Mammary epithelial cell (primary cell): ENCODE measurements at regions of chr3 and their contacts with region 1.

Region 1: GRCh38 chr3:98602078-98602678 is 8.8 kb upstream of the CPOX start:
- DNase-seq: peak; percentile 48
- H3K4me3 ChIP-seq: no peak overlapping the region
- H3K27ac ChIP-seq: no peak overlapping the region
- H3K4me1 ChIP-seq: no peaks in the 10 kb centered on the region
- H3K27me3 ChIP-seq: no peaks in the 10 kb centered on the region
- CTCF ChIP-seq: peak; percentile 82 to 83

Region 2: GRCh38 chr3:98657457-98657856 is 55.3 kb after region 1 on chr3:
- CTCF ChIA-PET with region 1: no interaction called
- dilution Hi-C with region 1: no loop called
- in situ Hi-C with region 1: no loop called
- intact Hi-C with region 1: loop called (anchors 2 kb)
- DNase-seq: peak; percentile 24
- H3K4me3 ChIP-seq: peak overlapping the region in 1 of 3 experiments; percentile 4
- H3K27ac ChIP-seq: no peak overlapping the region
- H3K4me1 ChIP-seq: peaks cover 6% of the 10 kb centered on the region
- H3K27me3 ChIP-seq: no peaks in the 10 kb centered on the region
- CTCF ChIP-seq: peak; percentile 25 to 61

Region 3: GRCh38 chr3:98784666-98785600 is 182.8 kb after region 1 on chr3:
- CTCF ChIA-PET with region 1: no interaction called
- dilution Hi-C with region 1: no loop called
- in situ Hi-C with region 1: no loop called
- intact Hi-C with region 1: loop called (anchors 5 kb)
- DNase-seq: peak; percentile 87
- H3K4me3 ChIP-seq: no peak overlapping the region
- H3K27ac ChIP-seq: peak overlapping the region; percentile 30
- H3K4me1 ChIP-seq: peaks cover 48% of the 10 kb centered on the region
- H3K27me3 ChIP-seq: no peaks in the 10 kb centered on the region
- CTCF ChIP-seq: no peak

Region 4: GRCh38 chr3:98809557-98809956 is 207.4 kb after region 1 on chr3:
- CTCF ChIA-PET with region 1: no interaction called
- dilution Hi-C with region 1: loop called (anchors 5 kb)
- in situ Hi-C with region 1: loop called (anchors 5 kb)
- intact Hi-C with region 1: loop called (anchors 1 kb)
- DNase-seq: no peak
- H3K4me3 ChIP-seq: no peak overlapping the region
- H3K27ac ChIP-seq: no peak overlapping the region
- H3K4me1 ChIP-seq: peaks cover 18% of the 10 kb centered on the region
- H3K27me3 ChIP-seq: no peaks in the 10 kb centered on the region
- CTCF ChIP-seq: no peak

Region 5: DNA sequence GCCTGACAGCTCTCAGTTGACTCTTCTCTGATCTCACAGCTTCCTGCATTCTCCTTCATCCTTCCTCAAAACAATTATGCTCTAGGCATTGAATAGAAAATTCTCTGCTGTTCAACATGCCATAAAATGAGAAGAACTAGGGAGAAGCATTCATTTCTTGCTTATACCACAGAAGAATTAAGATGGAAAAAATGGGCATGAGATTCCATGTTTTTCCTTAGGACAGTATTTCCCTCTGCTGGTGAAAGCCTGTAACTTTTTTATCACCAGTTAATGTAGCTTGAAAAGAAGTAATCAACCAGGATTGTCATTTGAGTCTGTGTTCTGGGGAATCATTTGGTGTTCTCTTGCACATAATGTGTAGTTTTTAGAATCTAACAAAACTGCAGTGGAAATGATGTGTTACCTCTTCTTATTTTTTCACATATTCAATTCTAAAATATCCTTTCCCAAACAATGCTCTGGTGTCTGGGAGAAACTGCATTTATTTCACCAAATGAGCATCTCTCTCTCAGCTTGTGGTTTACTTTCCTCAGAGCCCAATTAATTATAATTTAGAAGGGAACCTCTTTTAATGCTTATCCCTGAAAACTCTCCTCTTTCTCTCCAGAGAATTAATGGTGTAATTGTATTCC is 392.1 kb after region 1 on chr3:
- CTCF ChIA-PET with region 1: interaction called, 3 read pairs
- dilution Hi-C with region 1: no loop called
- in situ Hi-C with region 1: loop called (anchors 10 kb)
- intact Hi-C with region 1: loop called (anchors 1 kb)
- DNase-seq: peak; percentile 39
- H3K4me3 ChIP-seq: no peak overlapping the region
- H3K27ac ChIP-seq: no peak overlapping the region
- H3K4me1 ChIP-seq: peaks cover 4% of the 10 kb centered on the region
- H3K27me3 ChIP-seq: no peaks in the 10 kb centered on the region
- CTCF ChIP-seq: peak; percentile 59 to 68